AG04449 (cell line): ENCODE measurements at regions of chr13 and their contacts with region 1.

Region 1: DNA sequence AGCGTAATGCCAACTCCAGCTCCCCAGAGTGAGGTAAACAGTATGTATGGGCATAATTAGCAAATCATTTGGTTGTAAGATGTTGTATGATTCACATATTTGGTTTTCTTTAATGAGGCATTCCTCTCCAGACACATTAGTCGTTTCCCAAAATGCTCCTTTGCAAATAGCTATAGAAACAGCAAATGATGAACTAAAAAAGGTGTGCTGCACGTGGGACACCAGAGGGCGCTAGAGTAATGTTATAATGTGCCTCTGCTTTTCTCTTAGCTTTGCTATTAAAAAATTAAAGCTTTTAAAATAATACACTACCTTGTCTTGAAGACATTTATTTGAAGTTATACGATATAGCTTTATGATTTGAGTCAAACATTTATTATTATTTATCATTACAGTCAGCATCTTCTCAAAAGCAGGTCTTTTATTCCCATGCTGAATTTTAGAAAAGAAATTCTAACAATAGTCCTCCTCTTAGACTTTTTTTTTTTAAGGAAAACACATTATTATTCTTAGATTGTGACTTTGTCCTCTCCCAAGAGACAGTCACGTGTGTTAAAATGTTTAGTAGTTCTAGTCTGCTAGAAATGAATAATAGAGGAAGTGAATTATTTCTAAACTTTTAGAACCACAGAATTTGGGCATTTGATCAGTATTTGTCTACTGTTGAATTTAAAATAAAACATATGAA is 121.6 kb upstream of the FRY start:
- DNase-seq: no peak
- H3K4me3 ChIP-seq: no peak overlapping the region
- CTCF ChIP-seq: peak; percentile 62

Region 2: DNA sequence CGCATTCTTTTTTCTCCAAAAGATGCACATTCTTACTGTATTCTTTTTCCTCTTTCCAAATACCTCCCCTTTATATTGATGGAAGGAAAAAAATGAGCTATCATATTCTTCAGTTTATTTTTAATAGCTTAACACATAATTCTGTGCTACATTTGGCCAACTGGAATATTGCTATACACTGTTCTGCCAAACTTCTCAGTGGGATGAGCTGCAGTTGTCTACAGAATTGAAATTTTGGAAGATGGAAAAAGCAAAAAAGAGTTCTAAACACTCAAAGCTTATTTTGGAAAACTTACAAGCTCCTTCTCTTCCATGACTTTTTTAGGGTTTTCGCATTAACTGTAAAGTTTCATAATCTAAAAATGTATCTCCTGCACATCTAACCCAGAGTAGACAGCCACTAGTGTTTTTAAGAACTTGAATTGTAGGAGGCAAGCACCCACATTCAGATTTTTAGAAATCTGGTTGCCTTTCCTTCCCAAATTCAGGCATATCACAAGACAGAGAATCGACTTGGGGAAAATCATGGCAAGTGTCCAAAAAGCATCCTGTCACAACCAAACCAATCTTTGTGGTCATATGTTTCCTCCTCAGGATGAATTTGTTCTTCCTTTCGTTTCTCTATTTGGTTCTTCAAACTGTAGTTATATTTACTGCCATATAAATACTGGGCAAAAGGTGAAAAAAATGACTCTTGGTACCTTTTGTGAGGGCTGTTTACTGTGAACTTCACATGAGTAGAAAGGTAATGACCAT is 10.1 kb after region 1 on chr13:
- CTCF ChIA-PET with region 1: interaction called, 48 read pairs
- POLR2A ChIA-PET with region 1: no interaction called
- DNase-seq: no peak
- H3K4me3 ChIP-seq: no peak overlapping the region
- CTCF ChIP-seq: no peak

Region 3: DNA sequence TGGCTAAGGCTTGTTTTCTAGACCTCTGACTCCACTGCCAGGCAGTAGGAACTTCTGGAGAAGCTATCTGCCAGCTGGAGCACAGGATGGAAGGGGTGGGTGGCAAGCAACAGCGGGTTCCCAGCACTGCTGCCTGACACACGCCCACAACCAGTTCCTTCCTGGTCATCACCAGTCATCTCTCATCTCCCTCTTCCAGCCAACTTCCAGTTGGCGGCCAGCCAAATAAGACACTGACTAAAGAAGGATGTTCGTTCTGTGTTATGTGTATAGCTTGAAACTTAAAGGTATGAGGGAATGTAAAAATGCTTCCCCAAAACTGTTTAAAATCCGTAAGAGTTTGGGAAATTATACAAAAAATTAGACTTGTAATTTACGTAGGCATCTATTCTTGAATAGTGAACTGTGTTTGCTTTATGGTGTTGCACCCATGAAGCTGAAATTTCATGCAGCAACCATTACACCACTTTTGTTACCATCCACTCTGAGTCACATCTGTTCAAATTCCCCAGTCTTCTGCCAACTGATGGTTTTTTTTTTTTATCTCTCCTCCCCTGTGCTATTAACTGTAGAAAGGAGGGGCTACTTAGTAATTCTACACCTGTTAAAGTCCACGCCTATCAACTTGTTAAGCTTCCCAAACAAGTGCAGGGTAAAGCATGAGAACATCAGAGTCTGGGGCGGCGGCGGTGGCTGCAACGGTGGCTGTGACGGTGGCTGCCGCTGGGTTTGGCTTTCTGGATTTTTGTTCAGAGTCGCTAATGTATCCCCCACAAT is 35.4 kb after region 1 on chr13:
- CTCF ChIA-PET with region 1: interaction called, 13 read pairs
- POLR2A ChIA-PET with region 1: no interaction called
- DNase-seq: peak; percentile 19
- H3K4me3 ChIP-seq: no peak overlapping the region
- CTCF ChIP-seq: no peak

Region 4: DNA sequence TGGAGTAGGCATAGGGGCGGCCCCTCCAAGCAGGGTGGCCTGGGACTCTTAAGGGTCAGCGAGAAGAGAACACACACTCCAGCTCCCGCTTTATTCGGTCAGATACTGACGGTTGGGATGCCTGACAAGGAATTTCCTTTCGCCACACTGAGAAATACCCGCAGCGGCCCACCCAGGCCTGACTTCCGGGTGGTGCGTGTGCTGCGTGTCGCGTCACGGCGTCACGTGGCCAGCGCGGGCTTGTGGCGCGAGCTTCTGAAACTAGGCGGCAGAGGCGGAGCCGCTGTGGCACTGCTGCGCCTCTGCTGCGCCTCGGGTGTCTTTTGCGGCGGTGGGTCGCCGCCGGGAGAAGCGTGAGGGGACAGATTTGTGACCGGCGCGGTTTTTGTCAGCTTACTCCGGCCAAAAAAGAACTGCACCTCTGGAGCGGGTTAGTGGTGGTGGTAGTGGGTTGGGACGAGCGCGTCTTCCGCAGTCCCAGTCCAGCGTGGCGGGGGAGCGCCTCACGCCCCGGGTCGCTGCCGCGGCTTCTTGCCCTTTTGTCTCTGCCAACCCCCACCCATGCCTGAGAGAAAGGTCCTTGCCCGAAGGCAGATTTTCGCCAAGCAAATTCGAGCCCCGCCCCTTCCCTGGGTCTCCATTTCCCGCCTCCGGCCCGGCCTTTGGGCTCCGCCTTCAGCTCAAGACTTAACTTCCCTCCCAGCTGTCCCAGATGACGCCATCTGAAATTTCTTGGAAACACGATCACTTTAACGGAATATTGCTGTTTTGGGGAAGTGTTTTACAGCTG is 405.4 kb after region 1 on chr13 and contains the starts of genes BRCA2 and ZAR1L:
- CTCF ChIA-PET with region 1: interaction called, 10 read pairs
- POLR2A ChIA-PET with region 1: no interaction called
- DNase-seq: no peak
- H3K4me3 ChIP-seq: peak within 1 kb of the TSS; percentile 92
- CTCF ChIP-seq: no peak

Region 5: GRCh38 chr13:32586080-32586900 is 676.3 kb after region 1 on chr13 and contains the start of gene PDS5B:
- CTCF ChIA-PET with region 1: interaction called, 154 read pairs
- POLR2A ChIA-PET with region 1: no interaction called
- DNase-seq: peak; percentile 51
- H3K4me3 ChIP-seq: peak within 1 kb of the TSS; percentile 85
- CTCF ChIP-seq: peak; percentile 80